Gastrocnemius medialis (tissue), 4 donors: ENCODE measurements at regions of chr3 and their contacts with region 1.

Region 1: DNA sequence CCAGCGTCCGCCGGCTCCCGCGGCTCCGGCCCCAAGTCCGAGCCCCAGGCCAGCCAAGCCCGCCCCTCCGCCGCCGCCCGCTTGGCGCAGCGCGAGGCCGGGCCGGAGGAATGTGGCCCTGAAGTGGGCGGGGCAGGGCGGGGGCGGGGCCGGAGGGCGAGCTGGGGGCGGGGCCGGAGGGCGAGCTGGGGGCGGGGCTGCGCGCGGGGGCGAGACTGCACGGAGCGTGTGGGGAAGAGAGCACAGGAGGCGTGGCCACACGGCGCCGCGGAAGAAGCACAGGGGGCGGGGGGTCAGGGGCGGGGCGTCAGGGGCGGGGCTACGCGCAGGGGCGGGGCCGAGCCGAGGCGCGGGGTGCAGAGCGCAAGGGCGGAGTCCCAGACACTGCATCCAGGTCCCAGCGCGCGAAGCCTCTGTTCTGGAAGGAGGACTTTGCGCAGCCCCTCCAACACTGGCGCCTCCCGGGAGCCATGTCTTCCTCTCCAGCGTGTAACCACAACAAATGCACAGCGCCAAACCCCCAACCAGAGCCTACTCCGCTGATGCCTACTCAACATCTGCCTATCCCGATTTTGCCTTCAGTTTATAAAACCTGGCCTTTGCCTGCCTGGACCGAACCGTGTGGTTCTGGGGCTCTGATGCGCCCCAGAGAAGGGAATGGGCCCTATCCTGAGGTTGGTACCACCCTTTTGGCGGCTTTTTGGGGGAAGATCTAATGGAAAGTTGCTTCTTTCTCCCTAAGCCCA is 105.5 kb downstream of the IQSEC1 start:
- DNase-seq: peak; percentile 89 to 90
- ATAC-seq: peak; percentile 53 to 65
- H3K4me3 ChIP-seq: peak overlapping the region; percentile 59 to 82 (median 69)
- H3K27ac ChIP-seq: peak overlapping the region; percentile 70 to 90 (median 82)
- H3K4me1 ChIP-seq: peaks cover 78 to 84% of the 10 kb centered on the region in 2 donors
- H3K27me3 ChIP-seq: no peaks in the 10 kb centered on the region
- CTCF ChIP-seq: no peak
- POLR2A ChIP-seq: peak in 1 of 2 donors; percentile 44

Region 2: DNA sequence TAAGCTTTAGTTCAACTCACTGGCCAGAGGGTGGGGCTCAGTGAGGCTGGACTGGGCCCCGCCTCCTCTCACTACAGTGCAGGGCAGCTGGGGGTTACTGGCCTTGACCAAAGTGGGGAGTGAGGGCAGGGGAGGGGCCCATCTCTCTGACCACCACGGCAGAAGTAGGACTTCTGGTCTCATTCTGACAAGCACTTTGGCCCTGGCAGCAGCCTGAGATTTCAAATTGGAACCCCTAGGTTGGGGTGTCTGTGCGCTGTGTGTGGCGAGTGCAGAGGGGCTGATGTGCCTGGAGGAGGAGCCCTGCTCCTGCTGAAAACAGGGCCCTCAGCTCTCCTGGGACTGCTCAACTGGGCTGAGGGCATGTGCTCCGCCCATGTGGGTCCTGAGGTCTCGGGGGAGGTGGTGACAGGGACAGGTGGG is 66.1 kb before region 1 on chr3:
- in situ Hi-C with region 1: no loop called
- intact Hi-C with region 1: no loop called
- DNase-seq: no peak
- ATAC-seq: no peak
- H3K4me3 ChIP-seq: no peak overlapping the region
- H3K27ac ChIP-seq: no peak overlapping the region
- H3K4me1 ChIP-seq: peaks cover 17 to 20% of the 10 kb centered on the region in 2 donors
- H3K27me3 ChIP-seq: no peaks in the 10 kb centered on the region
- CTCF ChIP-seq: no peak
- POLR2A ChIP-seq: no peak

Region 3: DNA sequence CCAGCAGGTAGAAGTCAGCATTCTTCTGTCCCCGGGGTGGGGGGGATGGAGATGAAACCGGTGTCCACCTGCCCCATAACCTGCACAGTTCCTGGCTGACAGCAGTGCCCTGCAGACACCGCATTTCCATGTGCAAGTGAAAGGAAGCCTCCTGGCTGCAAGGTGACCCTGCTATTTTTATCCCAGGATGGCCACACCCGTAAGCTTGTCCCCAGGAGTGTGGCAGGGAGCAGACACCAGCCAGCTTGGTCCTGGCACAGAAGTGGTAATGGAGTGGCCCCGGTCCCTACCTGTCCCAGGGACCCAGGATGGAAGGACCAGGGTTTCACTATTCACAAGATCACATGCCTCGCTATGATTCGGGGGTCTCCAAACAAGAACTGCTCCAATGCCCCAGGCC is 41.1 kb before region 1 on chr3:
- in situ Hi-C with region 1: no loop called
- intact Hi-C with region 1: loop called (anchors 2 kb)
- DNase-seq: peak; percentile 81 to 89
- ATAC-seq: peak; percentile 82 to 95
- H3K4me3 ChIP-seq: no peak overlapping the region
- H3K27ac ChIP-seq: peak overlapping the region; percentile 64 to 77 (median 72)
- H3K4me1 ChIP-seq: peaks cover 52 to 64% of the 10 kb centered on the region in 2 donors
- H3K27me3 ChIP-seq: no peaks in the 10 kb centered on the region
- CTCF ChIP-seq: no peak
- POLR2A ChIP-seq: no peak